ENCODE measurements at regions of chrX and their contacts with region 1.

Region 1: GRCh38 chrX:12955882-12956703 is 18.8 kb upstream of the TMSB4X start:
- DNase-seq: no peak
- ATAC-seq: peak; percentile 45
- H3K4me3 Mint-ChIP-seq: peak overlapping the region; percentile 79
- H3K27ac Mint-ChIP-seq: peak overlapping the region; percentile 96
- H3K4me1 Mint-ChIP-seq: peaks cover 79% of the 10 kb centered on the region
- H3K27me3 Mint-ChIP-seq: no peaks in the 10 kb centered on the region
- CTCF ChIP-seq: no peak

Region 2: GRCh38 chrX:13005661-13006473 is 49.8 kb after region 1 on chrX:
- CTCF ChIA-PET with region 1: interaction called, 6 read pairs
- POLR2A ChIA-PET with region 1: interaction called, 43 read pairs
- intact Hi-C with region 1: no loop called
- DNase-seq: no peak
- ATAC-seq: peak; percentile 61
- H3K4me3 Mint-ChIP-seq: peak overlapping the region; percentile 84
- H3K27ac Mint-ChIP-seq: peak overlapping the region; percentile 97
- H3K4me1 Mint-ChIP-seq: peaks cover 80% of the 10 kb centered on the region
- H3K27me3 Mint-ChIP-seq: no peaks in the 10 kb centered on the region
- CTCF ChIP-seq: no peak

Measured in activated B cell treated with CpG ODN at 0.5 μM for 24 hours (primary cell).